Breast epithelium (tissue), 4 donors: ENCODE measurements at regions of chr7 and their contacts with region 1.

Region 1: DNA sequence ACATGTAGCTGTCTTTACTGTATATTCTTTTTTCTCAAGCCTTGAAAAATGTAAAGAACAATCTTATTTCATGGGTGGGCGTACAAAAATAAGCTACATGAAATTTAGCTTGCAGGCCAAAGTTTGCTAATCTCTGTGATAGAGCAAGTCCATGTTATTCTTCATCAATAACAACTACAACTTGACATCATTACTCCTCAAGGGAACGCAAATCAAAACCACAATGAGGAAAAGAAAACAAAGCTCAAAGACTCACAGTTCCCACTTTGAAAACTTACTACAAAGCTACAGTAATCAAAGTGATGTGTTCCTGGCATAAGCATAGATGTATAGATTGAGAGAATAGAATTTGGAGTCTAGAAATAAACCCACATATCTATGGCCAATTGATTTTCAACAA is 62.5 kb downstream of the GNA12 start:
- DNase-seq: no peak
- H3K4me3 ChIP-seq: no peak overlapping the region
- H3K27ac ChIP-seq: no peak overlapping the region
- H3K4me1 ChIP-seq: no peaks in the 10 kb centered on the region
- H3K27me3 ChIP-seq: no peaks in the 10 kb centered on the region
- CTCF ChIP-seq: no peak
- POLR2A ChIP-seq: no peak

Region 2: DNA sequence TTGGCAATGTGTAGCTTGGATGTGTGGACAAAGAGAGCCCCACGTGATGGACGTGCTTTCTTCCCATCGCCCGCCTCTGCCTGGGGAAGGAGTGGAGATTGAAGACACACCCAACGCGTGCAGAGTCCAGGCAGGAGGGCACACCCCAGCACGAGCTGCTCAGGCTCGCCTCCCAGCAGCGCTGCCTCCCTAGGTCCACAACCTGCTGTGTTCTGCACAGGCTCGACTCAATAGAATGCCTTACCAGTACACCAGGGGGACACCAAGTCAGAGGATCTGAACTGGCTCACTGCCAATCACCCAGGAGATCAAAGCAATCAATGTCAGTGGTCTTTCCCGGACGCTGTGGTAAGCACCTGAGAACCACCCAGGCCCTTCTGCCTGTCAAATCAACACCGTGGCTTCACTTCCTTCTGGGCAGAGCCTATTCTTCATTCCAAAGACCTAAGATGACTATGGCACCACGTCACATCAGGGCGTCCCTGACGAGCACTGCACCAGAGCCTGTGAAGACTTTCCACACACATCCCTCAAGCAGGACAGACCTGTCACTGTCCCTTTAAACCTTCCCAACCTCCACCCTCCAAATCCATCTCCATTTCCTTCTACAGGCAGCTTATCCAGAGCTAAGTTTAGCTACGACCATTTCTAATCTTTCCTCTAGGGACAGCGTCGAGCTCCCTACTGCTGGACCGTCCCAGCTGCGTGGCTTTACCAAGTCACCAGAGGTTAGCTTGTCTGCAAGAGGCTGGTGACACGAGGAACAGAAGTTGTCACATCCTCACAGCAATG is 21.3 kb before region 1 on chr7:
- intact Hi-C with region 1: loop called (anchors 1 kb)
- DNase-seq: no peak
- H3K4me3 ChIP-seq: peak overlapping the region in 1 of 3 donors; percentile 12
- H3K27ac ChIP-seq: peak overlapping the region; percentile 58 to 99
- H3K4me1 ChIP-seq: peaks cover 10 to 25% of the 10 kb centered on the region in 2 donors
- H3K27me3 ChIP-seq: no peaks in the 10 kb centered on the region
- CTCF ChIP-seq: peak in 1 of 3 donors; percentile 19
- POLR2A ChIP-seq: no peak

Region 3: DNA sequence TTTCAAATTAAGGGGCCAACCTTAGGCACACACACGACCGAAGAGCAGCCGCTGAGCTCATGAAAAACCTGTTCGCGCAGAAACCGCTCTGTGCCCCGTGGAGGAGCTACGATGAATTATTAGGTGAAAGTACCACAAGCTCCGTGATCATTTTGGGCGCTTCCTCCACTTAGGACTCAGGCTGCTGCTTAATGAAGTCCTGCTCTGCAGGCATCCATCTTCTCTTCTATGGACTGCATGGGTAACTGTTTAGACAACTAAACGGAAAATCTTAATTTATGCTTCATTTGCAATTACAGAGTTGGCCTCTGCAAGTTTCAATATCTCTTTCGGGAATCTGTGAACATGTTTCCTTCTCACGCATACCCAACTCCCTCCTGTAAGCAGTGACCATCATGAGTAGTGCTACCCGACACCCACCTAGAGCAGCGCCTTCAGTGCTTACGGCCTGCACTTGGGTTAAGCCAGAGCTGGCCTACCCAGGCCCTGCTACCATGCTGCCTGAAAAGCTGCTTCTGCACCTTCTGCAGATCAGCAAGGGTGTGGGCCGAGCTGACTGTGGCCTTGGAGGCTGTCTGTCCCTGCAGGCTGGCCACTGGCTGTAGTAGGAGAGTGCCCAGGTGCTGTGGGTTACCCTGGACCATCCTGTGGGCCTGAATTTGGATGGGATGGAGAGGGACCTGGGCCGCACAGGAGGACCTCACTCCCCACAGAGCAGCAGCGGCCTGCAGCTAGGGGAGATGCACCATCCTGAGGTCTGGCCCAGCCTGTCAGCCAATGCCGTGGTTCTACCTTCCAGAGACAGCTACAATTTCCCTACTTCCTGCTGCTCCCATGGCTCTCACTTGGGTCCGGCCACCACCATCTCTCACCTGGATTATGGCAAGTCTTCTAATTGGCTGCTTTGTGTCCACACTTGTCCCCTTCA is 26.5 kb after region 1 on chr7:
- intact Hi-C with region 1: no loop called
- DNase-seq: peak in 1 of 2 donors; percentile 45
- H3K4me3 ChIP-seq: no peak overlapping the region
- H3K27ac ChIP-seq: peak overlapping the region in 1 of 2 donors; percentile 36
- H3K4me1 ChIP-seq: peaks cover 5 to 13% of the 10 kb centered on the region in 2 donors
- H3K27me3 ChIP-seq: no peaks in the 10 kb centered on the region
- CTCF ChIP-seq: no peak
- POLR2A ChIP-seq: no peak